Ovary (tissue), 10 donors: ENCODE measurements at regions of chr19 and their contacts with region 1.

Region 1: GRCh38 chr19:19956434-19957075 is 55.8 kb downstream of the ZNF93 start:
- DNase-seq: no peak
- H3K4me3 ChIP-seq: no peak overlapping the region
- H3K27ac ChIP-seq: no peak overlapping the region
- H3K4me1 ChIP-seq: peaks cover 6% of the 10 kb centered on the region
- H3K27me3 ChIP-seq: no peaks in the 10 kb centered on the region
- CTCF ChIP-seq: no peak
- EP300 ChIP-seq: no peak
- POLR2A ChIP-seq: no peak

Region 2: GRCh38 chr19:19531951-19532805 is 424.4 kb before region 1 on chr19:
- intact Hi-C with region 1: loop called in 2 of 4 experiments (anchors 2 to 5 kb)
- DNase-seq: peak; percentile 76 to 93 (median 89)
- H3K4me3 ChIP-seq: no peak overlapping the region
- H3K27ac ChIP-seq: no peak overlapping the region
- H3K4me1 ChIP-seq: no peaks in the 10 kb centered on the region
- H3K27me3 ChIP-seq: no peaks in the 10 kb centered on the region
- CTCF ChIP-seq: peak; percentile 92 to 94 (median 92)
- EP300 ChIP-seq: no peak
- POLR2A ChIP-seq: no peak

Region 3: GRCh38 chr19:19663256-19664038 is 293.1 kb before region 1 on chr19 and contains the start of gene ATP13A1:
- intact Hi-C with region 1: loop called in 1 of 4 experiments (anchors 10 kb)
- DNase-seq: peak; percentile 94 to 97 (median 95)
- H3K4me3 ChIP-seq: peak within 1 kb of the TSS; percentile 89
- H3K27ac ChIP-seq: peak within 1 kb of the TSS; percentile 89 to 95
- H3K4me1 ChIP-seq: peaks cover 3% of the 10 kb centered on the region
- H3K27me3 ChIP-seq: no peaks in the 10 kb centered on the region
- CTCF ChIP-seq: no peak
- EP300 ChIP-seq: no peak
- POLR2A ChIP-seq: peak; percentile 12
- total RNA-seq, gene ATP13A1: 46.7 to 407 (median 67.7) TPM

Region 4: GRCh38 chr19:20039203-20039723 is 82.7 kb after region 1 on chr19 and contains the start of gene ZNF682:
- intact Hi-C with region 1: no loop called
- DNase-seq: peak; percentile 92 to 97 (median 96)
- H3K4me3 ChIP-seq: peak within 1 kb of the TSS; percentile 67
- H3K27ac ChIP-seq: peak within 1 kb of the TSS in 1 of 2 donors; percentile 29
- H3K4me1 ChIP-seq: no peaks in the 10 kb centered on the region
- H3K27me3 ChIP-seq: no peaks in the 10 kb centered on the region
- CTCF ChIP-seq: no peak
- EP300 ChIP-seq: no peak
- POLR2A ChIP-seq: no peak
- total RNA-seq, gene ZNF682: 1.4 to 7.6 (median 4.5) TPM